K562 (cell line): ENCODE measurements at regions of chr6 and their contacts with region 1.

Region 1: GRCh38 chr6:50816115-50816675 is 2.5 kb upstream of the TFAP2B start:
- DNase-seq: peak; percentile 80 to 94 (median 86)
- ATAC-seq: peak; percentile 98
- H3K4me3 ChIP-seq: peak overlapping the region; percentile 47
- H3K27ac ChIP-seq: peak overlapping the region; percentile 40; the same call in 2 of the 3 replicates
- H3K4me1 ChIP-seq: no peaks in the 10 kb centered on the region
- H3K27me3 ChIP-seq: peaks cover 0 to 3% of the 10 kb centered on the region in 2 experiments; a peak in 1 of 5 replicates
- CTCF ChIP-seq: peak; percentile 86 to 96 (median 88)
- EP300 ChIP-seq: no peak
- POLR2A ChIP-seq: no peak
- RAD21 ChIP-seq: peak; percentile 96 to 98

Region 2: GRCh38 chr6:50962213-50962759 is 146.1 kb after region 1 on chr6:
- CTCF ChIA-PET with region 1: no interaction called
- POLR2A ChIA-PET with region 1: no interaction called
- in situ Hi-C with region 1: no loop called
- intact Hi-C with region 1: loop called (anchors 2 kb)
- DNase-seq: peak in 2 of 4 experiments; percentile 50 to 53
- ATAC-seq: peak; percentile 44
- H3K4me3 ChIP-seq: no peak overlapping the region
- H3K27ac ChIP-seq: peak overlapping the region; percentile 61
- H3K4me1 ChIP-seq: peaks cover 17 to 51% of the 10 kb centered on the region in 2 experiments
- H3K27me3 ChIP-seq: no peaks in the 10 kb centered on the region
- CTCF ChIP-seq: no peak
- EP300 ChIP-seq: peak; percentile 66; the same call in 1 of the 2 replicates
- POLR2A ChIP-seq: no peak
- RAD21 ChIP-seq: no peak

Region 3: DNA sequence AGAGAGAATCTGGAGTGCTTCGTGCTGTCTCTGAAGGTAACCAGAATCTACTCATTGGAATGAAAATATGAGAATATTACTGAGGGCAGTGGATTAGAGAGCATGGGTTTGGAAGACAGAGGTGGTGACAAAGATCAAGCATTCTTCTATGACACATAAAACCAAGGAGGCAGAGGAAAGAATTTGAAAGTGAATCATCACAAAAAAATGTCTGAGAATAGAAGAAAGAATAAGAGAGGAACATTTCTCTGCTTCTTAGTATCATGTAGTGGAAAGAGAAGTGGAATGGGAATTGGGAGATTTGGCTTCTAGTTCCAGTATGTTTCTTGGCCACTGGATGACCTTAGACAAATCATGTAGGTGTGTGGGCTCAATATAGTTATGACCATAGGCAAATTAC is 476.5 kb after region 1 on chr6:
- CTCF ChIA-PET with region 1: no interaction called
- POLR2A ChIA-PET with region 1: no interaction called
- in situ Hi-C with region 1: no loop called
- intact Hi-C with region 1: loop called (anchors 10 kb)
- DNase-seq: no peak
- ATAC-seq: no peak
- H3K4me3 ChIP-seq: no peak overlapping the region
- H3K27ac ChIP-seq: no peak overlapping the region
- H3K4me1 ChIP-seq: no peaks in the 10 kb centered on the region; a peak in 1 of 5 replicates
- H3K27me3 ChIP-seq: no peaks in the 10 kb centered on the region
- CTCF ChIP-seq: no peak
- EP300 ChIP-seq: no peak
- POLR2A ChIP-seq: no peak
- RAD21 ChIP-seq: no peak

Region 4: DNA sequence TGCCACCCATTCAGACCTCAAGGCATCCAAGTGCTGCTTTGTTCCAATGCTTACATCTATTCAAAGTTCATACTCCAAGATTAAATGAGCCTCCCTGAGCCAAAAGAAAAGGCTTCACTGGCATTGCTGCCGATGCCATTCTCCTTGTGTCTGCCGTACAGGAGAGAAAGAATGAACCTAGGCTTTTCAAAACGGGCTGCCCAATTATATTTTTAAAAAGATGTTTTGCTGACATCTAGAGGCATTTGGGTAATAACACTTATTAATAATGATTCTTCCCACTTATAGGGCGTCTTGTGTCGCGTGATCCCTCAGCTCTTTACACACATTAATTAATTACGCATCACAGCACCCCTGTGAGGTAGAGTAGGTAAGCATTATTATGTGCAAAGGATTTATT is 725.7 kb after region 1 on chr6:
- CTCF ChIA-PET with region 1: interaction called, 9 read pairs
- POLR2A ChIA-PET with region 1: no interaction called
- in situ Hi-C with region 1: loop called (anchors 25 kb)
- intact Hi-C with region 1: loop called (anchors 5 kb)
- DNase-seq: peak in 1 of 4 experiments; percentile 3
- ATAC-seq: no peak
- H3K4me3 ChIP-seq: no peak overlapping the region
- H3K27ac ChIP-seq: no peak overlapping the region
- H3K4me1 ChIP-seq: no peaks in the 10 kb centered on the region
- H3K27me3 ChIP-seq: no peaks in the 10 kb centered on the region
- CTCF ChIP-seq: peak in 1 of 3 experiments; percentile 32; a peak in 1 of 6 replicates
- EP300 ChIP-seq: no peak
- POLR2A ChIP-seq: no peak
- RAD21 ChIP-seq: peak in 1 of 2 experiments; percentile 30; a peak in 1 of 4 replicates

Region 5: DNA sequence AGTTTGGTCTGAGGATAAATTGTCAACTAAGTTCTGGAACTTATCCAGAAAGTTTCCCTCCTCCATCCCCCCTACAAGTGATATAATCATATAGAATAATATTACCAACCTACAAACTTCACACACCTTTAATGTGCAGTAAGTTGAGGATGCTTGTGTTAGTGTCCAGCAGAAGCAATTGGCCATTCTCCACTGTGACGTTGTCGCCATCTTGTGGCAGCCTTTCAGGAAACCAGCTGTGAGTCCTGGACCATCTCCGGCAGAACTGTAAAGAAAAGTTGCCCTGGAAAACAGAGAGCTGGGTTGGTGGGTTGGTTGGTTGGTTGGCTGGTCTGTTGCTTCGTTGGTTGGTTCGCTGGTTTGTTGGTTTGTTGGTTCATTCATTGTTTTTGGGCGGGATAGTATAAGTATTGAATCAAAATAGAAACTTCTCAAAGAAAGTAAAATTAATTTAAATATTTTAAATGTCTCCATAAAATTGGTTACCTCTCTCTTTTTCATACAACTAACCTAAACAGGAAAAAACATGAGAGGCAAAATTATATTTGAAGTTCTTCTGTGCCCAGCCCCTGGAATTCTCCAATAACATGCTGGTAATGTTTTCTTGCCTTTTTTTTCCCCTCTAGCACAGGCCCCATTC is 1143.7 kb after region 1 on chr6:
- CTCF ChIA-PET with region 1: interaction called, 8 read pairs
- POLR2A ChIA-PET with region 1: no interaction called
- in situ Hi-C with region 1: no loop called
- intact Hi-C with region 1: loop called (anchors 2 kb)
- DNase-seq: peak; percentile 50 to 77 (median 58)
- ATAC-seq: peak; percentile 94
- H3K4me3 ChIP-seq: no peak overlapping the region
- H3K27ac ChIP-seq: no peak overlapping the region
- H3K4me1 ChIP-seq: no peaks in the 10 kb centered on the region
- H3K27me3 ChIP-seq: no peaks in the 10 kb centered on the region
- CTCF ChIP-seq: peak; percentile 80 to 84 (median 82)
- EP300 ChIP-seq: no peak
- POLR2A ChIP-seq: no peak
- RAD21 ChIP-seq: peak; percentile 65 to 85